Activated CD4-positive, alpha-beta T cell treated with anti-CD3 and anti-CD28 coated beads, Interleukin-2, amount 10 ng/mL, durations not matched to agents 24 days and 14 days (primary cell): ENCODE measurements at regions of chr3 and their contacts with region 1.

Region 1: DNA sequence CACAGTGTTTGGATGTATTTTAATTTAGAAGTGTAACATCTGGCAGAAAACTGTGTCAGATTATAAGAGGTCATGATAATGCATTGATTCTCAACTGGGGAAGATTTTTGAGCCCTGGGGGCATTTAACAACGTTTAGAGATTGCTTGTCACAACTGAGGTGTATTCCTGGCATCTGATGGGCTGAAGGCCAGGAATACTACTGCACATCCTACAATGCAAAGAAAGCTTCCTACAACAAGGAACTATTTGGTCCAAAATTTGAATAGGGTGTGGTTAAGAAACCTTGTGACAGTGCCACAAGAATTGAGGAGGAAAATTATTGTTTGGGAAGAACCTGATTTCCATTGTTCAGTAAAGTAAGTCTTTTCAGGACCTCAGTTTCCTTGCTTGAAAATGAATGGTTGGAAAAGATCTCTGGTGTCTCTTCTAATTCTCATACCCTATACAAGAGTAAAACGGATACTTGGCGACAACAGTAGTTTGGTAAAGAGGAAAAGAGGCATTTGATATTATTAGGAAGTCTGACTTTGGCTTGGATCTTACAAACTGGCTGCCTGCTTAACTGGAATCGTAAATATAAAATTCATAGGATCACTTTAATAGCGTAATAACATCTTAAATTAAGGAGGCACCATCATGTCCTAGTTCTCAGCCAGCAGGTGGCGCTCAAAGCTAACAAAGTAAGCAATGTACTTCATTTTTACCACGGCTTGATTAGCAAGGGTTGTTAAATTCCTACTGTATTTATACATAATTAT is 4.3 kb downstream of the DAZL start:
- DNase-seq: peak; percentile 91
- H3K4me3 Mint-ChIP-seq: no peak overlapping the region
- H3K27ac Mint-ChIP-seq: no peak overlapping the region
- H3K4me1 Mint-ChIP-seq: peaks cover 19% of the 10 kb centered on the region
- H3K27me3 Mint-ChIP-seq: peaks cover 38% of the 10 kb centered on the region

Region 2: GRCh38 chr3:16264708-16265454 is 336.1 kb before region 1 on chr3 and contains the starts of genes DPH3 and OXNAD1:
- intact Hi-C with region 1: loop called (anchors 5 kb)
- DNase-seq: peak; percentile 100
- H3K4me3 Mint-ChIP-seq: peak within 1 kb of the TSS; percentile 97
- H3K27ac Mint-ChIP-seq: peak within 1 kb of the TSS; percentile 98
- H3K4me1 Mint-ChIP-seq: peaks cover 33% of the 10 kb centered on the region
- H3K27me3 Mint-ChIP-seq: no peaks in the 10 kb centered on the region
- total RNA-seq, gene DPH3: 27.6 and 30.1 TPM in 2 replicates
- total RNA-seq, gene OXNAD1: 27.1 and 29.8 TPM in 2 replicates

Region 3: GRCh38 chr3:16456784-16457415 is 144.1 kb before region 1 on chr3:
- intact Hi-C with region 1: no loop called
- DNase-seq: no peak
- H3K4me3 Mint-ChIP-seq: no peak overlapping the region
- H3K27ac Mint-ChIP-seq: no peak overlapping the region
- H3K4me1 Mint-ChIP-seq: peaks cover 29% of the 10 kb centered on the region
- H3K27me3 Mint-ChIP-seq: no peaks in the 10 kb centered on the region

Region 4: DNA sequence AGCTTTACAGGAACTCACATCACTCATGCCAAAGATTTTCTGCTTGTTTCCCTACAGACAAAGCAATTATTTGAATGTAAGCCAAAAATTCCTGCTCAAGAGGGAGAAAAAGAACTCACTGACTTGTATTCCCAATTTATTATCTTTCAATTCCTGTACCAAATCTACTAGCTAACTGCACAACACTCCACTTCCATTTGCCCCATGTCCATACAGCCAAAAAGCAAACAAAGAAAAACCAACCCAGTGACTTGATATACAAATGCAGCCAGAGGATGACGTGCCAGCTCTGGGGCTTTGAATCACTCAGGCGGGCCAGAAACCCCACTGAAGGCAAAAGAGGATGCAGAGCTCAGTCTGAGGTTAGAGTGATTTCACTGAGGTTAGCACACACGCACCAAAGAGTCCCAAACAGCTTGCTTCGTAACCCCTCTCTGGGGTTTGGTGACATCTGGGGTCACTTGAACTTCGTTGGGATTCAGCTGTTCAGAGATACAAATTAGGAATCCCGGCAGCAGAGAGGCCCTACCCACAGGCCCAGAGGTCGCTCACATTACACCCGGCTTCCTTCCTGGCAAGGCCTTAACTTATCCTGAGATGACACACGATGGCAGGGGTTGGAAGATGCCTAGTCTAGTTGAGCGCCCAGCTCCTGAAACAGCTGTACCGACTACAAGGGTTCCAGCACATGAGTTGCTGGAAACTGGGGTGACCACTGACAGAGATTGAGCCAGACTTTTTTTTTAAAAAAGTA is 89.1 kb before region 1 on chr3:
- intact Hi-C with region 1: loop called (anchors 2 kb)
- DNase-seq: peak; percentile 93
- H3K4me3 Mint-ChIP-seq: peak overlapping the region; percentile 95
- H3K27ac Mint-ChIP-seq: peak overlapping the region; percentile 85
- H3K4me1 Mint-ChIP-seq: peaks cover 64% of the 10 kb centered on the region
- H3K27me3 Mint-ChIP-seq: no peaks in the 10 kb centered on the region

Region 5: DNA sequence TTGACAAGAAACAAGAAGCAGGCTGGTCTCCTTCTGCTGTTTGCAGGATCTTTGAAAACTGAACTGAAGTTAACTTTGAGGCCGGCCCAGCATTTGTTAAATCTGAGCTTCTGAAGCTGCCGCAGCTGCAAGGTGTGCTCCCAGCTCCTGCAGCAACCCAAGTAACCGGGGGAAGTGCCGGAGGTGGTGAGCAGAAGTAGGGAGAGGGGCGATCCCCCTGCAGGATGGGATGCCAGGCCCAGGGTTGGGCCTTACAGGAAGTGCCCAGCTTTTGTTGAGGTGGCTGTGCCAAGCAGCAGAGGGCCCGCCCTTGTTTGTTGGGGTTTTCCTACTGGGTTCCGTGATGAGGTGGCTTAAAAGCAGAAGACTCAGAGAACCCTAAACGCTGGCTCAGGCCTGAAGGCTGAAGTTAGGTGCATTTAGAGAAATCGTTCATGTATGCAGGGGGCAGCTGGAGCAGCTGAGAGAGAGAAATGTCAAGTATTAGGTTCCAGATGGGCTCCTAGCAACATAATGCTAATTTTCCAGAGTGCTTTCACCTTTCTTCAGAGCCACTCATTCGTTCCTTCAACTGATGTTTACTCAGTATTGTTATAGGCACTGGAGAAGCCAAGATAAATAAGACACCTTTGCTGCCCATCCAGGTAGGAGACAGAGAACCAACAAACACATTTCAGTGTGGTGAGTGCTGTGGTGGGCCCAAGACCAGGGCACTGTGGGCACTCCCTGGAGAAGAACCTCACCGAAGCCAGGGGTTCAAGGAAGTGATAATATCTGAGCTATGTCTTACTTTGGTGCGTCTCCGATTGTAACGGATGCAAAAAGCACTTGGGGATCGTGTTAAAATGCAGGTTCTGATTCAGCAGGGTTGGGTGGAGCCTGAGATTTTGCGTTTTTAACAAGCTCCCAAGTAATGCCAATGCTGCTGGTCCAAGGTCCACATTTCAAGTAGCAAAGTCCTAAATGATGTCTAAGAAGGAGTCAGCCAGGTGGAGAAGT is 241.6 kb after region 1 on chr3:
- intact Hi-C with region 1: loop called (anchors 5 kb)
- DNase-seq: peak; percentile 92
- H3K4me3 Mint-ChIP-seq: peak overlapping the region; percentile 82
- H3K27ac Mint-ChIP-seq: peak overlapping the region; percentile 99
- H3K4me1 Mint-ChIP-seq: peaks cover 60% of the 10 kb centered on the region
- H3K27me3 Mint-ChIP-seq: no peaks in the 10 kb centered on the region

Region 6: GRCh38 chr3:17032407-17033034 is 431.6 kb after region 1 on chr3:
- intact Hi-C with region 1: loop called (anchors 5 kb)
- DNase-seq: peak; percentile 55
- H3K4me3 Mint-ChIP-seq: peak overlapping the region; percentile 1
- H3K27ac Mint-ChIP-seq: peak overlapping the region; percentile 46
- H3K4me1 Mint-ChIP-seq: peaks cover 61% of the 10 kb centered on the region
- H3K27me3 Mint-ChIP-seq: no peaks in the 10 kb centered on the region

Region 7: GRCh38 chr3:17233398-17233800 is 632.4 kb after region 1 on chr3:
- intact Hi-C with region 1: loop called (anchors 1 kb)
- DNase-seq: peak; percentile 84
- H3K4me3 Mint-ChIP-seq: no peak overlapping the region
- H3K27ac Mint-ChIP-seq: no peak overlapping the region
- H3K4me1 Mint-ChIP-seq: peaks cover 12% of the 10 kb centered on the region
- H3K27me3 Mint-ChIP-seq: no peaks in the 10 kb centered on the region